A673 (cell line): ENCODE measurements at regions of chr5 and their contacts with region 1.

Region 1: GRCh38 chr5:31232273-31232888 is 38.9 kb downstream of the CDH6 start:
- DNase-seq: peak; percentile 84
- H3K4me3 ChIP-seq: no peak overlapping the region
- H3K27ac ChIP-seq: no peak overlapping the region
- H3K4me1 ChIP-seq: peaks cover 44% of the 10 kb centered on the region
- H3K27me3 ChIP-seq: no peaks in the 10 kb centered on the region
- CTCF ChIP-seq: peak; percentile 88

Region 2: GRCh38 chr5:30401479-30402058 is 830.8 kb before region 1 on chr5:
- CTCF ChIA-PET with region 1: interaction called, 3 read pairs
- POLR2A ChIA-PET with region 1: no interaction called
- intact Hi-C with region 1: loop called (anchors 5 kb)
- DNase-seq: peak; percentile 70
- H3K4me3 ChIP-seq: no peak overlapping the region
- H3K27ac ChIP-seq: no peak overlapping the region
- H3K4me1 ChIP-seq: no peaks in the 10 kb centered on the region
- H3K27me3 ChIP-seq: no peaks in the 10 kb centered on the region
- CTCF ChIP-seq: peak; percentile 84

Region 3: DNA sequence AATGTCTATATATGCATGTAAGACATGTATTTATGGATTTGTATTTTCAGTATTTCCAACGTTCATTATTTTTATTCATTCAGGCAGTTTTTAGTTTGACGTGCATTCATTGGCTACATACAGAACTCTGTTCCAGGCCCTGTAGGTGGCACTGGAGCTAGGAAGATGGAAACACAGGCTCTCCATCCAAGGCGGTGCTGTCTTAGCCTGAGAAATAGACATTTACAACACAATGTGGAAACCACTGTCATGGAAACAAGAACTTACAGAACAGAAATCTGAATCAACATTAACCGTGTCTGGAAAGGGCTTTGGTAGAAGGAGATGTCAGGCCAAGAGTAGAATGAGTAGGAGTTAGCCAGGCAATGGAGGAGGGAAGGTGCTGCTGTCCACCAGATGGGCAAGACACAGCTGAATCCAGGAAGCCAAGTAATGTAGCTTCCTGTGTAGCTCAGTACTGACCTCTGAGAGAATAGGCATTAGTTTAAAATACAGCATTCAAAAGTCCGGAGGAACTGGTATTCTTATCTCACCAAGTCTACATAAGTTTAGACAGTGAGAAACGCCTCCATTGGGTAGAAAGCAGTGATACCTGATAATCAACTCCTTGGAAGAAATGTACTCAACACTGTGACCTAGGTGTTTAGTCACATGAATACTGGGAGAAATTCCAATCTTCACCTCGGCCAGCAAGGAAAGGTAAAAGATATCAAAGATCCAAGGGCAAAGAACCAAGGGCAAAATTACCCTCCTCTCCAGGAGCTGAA is 427.5 kb before region 1 on chr5:
- CTCF ChIA-PET with region 1: no interaction called
- POLR2A ChIA-PET with region 1: no interaction called
- intact Hi-C with region 1: loop called (anchors 5 kb)
- DNase-seq: peak; percentile 54
- H3K4me3 ChIP-seq: no peak overlapping the region
- H3K27ac ChIP-seq: no peak overlapping the region
- H3K4me1 ChIP-seq: no peaks in the 10 kb centered on the region
- H3K27me3 ChIP-seq: no peaks in the 10 kb centered on the region
- CTCF ChIP-seq: peak; percentile 54

Region 4: GRCh38 chr5:31487506-31487905 is 255.1 kb after region 1 on chr5:
- CTCF ChIA-PET with region 1: no interaction called
- POLR2A ChIA-PET with region 1: no interaction called
- intact Hi-C with region 1: loop called (anchors 5 kb)
- DNase-seq: no peak
- H3K4me3 ChIP-seq: no peak overlapping the region
- H3K27ac ChIP-seq: no peak overlapping the region
- H3K4me1 ChIP-seq: peaks cover 20% of the 10 kb centered on the region
- H3K27me3 ChIP-seq: no peaks in the 10 kb centered on the region
- CTCF ChIP-seq: peak; percentile 41; the same call in 1 of the 2 replicates